ENCODE measurements at regions of chr17 and their contacts with region 1.

Region 1: DNA sequence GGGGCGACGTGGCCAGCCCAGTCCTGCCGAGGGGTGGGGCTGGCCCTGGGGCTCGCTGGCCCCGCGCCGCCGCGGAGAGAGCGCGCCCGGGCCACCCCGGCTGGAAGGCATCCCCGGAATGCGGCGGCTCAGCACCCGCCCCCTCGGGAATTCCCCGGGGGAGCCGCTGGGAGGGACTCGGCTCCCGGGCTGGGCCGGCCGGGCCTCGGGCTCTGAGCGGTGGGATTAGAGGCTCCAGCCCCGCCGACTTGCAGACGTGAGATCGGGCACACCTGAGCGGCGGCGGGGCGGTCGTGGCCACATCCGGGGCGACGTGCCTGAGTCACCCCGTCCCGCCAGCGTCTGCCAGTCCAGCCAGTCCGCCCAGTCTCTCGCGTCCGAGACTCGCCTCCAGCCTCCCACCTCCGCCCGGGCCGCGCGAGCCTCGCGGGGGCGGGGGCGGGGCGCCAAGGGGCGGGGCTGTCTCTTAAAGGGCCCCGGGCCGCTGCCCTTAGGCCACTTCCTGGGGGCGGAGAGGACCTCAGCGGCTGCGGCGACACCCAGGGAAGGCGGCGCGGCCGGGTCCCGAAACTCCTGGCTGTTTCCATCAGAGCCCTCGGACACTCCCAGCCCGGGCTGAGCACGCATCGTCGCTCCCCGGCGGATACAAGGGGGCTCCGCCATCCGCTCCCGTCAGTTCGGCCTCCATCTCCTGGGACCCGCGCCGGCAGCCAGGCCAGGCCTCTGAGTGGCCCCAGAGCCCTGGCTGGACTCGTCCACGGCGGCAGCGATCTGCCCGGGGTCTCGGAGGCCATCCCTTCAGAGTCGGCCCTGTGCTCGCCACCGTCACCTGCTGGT is at the start of gene KCTD11:
- DNase-seq: peak; percentile 88 to 91 (median 88)
- ATAC-seq: peak; percentile 86
- H3K4me3 ChIP-seq: peak within 1 kb of the TSS; percentile 72
- H3K27ac ChIP-seq: peak within 1 kb of the TSS; percentile 88
- H3K4me1 ChIP-seq: peaks cover 3 to 70% of the 10 kb centered on the region in 2 experiments; a peak in 3 of 5 replicates
- H3K27me3 ChIP-seq: no peaks in the 10 kb centered on the region
- CTCF ChIP-seq: peak in 2 of 3 experiments; percentile 52 to 54; a peak in 4 of 6 replicates
- EP300 ChIP-seq: no peak
- POLR2A ChIP-seq: peak; percentile 66
- RAD21 ChIP-seq: peak in 1 of 2 experiments; percentile 13; a peak in 1 of 4 replicates
- polyA plus RNA-seq, gene KCTD11: 0.01 TPM in 1 of 2 experiments, not detected in the other

Region 2: GRCh38 chr17:5583406-5584382 is 1768.2 kb before region 1 on chr17:
- CTCF ChIA-PET with region 1: no interaction called
- POLR2A ChIA-PET with region 1: no interaction called
- in situ Hi-C with region 1: no loop called
- intact Hi-C with region 1: no loop called
- DNase-seq: peak in 2 of 4 experiments; percentile 5 to 8
- ATAC-seq: no peak
- H3K4me3 ChIP-seq: no peak overlapping the region
- H3K27ac ChIP-seq: no peak overlapping the region
- H3K4me1 ChIP-seq: no peaks in the 10 kb centered on the region
- H3K27me3 ChIP-seq: no peaks in the 10 kb centered on the region
- CTCF ChIP-seq: no peak
- EP300 ChIP-seq: no peak
- POLR2A ChIP-seq: no peak
- RAD21 ChIP-seq: no peak

Region 3: GRCh38 chr17:7336240-7337175 is 15.4 kb before region 1 on chr17 and contains the start of gene ACAP1:
- CTCF ChIA-PET with region 1: no interaction called
- POLR2A ChIA-PET with region 1: interaction called, 15 read pairs
- in situ Hi-C with region 1: no loop called
- intact Hi-C with region 1: no loop called
- DNase-seq: peak; percentile 44 to 68 (median 50)
- ATAC-seq: peak; percentile 93
- H3K4me3 ChIP-seq: 0 out of 2 replicates have a peak within 1 kb of the TSS, but pooled peaks have one; percentile 15
- H3K27ac ChIP-seq: peak within 1 kb of the TSS; percentile 30; the same call in 1 of the 3 replicates
- H3K4me1 ChIP-seq: peaks cover 11 to 28% of the 10 kb centered on the region in 2 experiments
- H3K27me3 ChIP-seq: no peaks in the 10 kb centered on the region
- CTCF ChIP-seq: no peak; a peak in 1 of 6 replicates
- EP300 ChIP-seq: no peak
- POLR2A ChIP-seq: no peak
- RAD21 ChIP-seq: no peak
- polyA plus RNA-seq, gene ACAP1: 0.15 to 0.38 TPM

Region 4: GRCh38 chr17:7502987-7503386 is 151.1 kb after region 1 on chr17:
- CTCF ChIA-PET with region 1: no interaction called
- POLR2A ChIA-PET with region 1: no interaction called
- in situ Hi-C with region 1: no loop called
- intact Hi-C with region 1: loop called (anchors 5 kb)
- DNase-seq: peak in 2 of 4 experiments; percentile 8 to 17
- ATAC-seq: peak; percentile 62
- H3K4me3 ChIP-seq: no peak overlapping the region
- H3K27ac ChIP-seq: no peak overlapping the region
- H3K4me1 ChIP-seq: no peaks in the 10 kb centered on the region
- H3K27me3 ChIP-seq: no peaks in the 10 kb centered on the region
- CTCF ChIP-seq: peak; percentile 33 to 45 (median 37); a peak in 4 of 6 replicates
- EP300 ChIP-seq: no peak
- POLR2A ChIP-seq: no peak
- RAD21 ChIP-seq: peak in 1 of 2 experiments; percentile 40; a peak in 2 of 4 replicates